Tibial artery (tissue), 4 donors: ENCODE measurements at regions of chr11 and their contacts with region 1.

Region 1: DNA sequence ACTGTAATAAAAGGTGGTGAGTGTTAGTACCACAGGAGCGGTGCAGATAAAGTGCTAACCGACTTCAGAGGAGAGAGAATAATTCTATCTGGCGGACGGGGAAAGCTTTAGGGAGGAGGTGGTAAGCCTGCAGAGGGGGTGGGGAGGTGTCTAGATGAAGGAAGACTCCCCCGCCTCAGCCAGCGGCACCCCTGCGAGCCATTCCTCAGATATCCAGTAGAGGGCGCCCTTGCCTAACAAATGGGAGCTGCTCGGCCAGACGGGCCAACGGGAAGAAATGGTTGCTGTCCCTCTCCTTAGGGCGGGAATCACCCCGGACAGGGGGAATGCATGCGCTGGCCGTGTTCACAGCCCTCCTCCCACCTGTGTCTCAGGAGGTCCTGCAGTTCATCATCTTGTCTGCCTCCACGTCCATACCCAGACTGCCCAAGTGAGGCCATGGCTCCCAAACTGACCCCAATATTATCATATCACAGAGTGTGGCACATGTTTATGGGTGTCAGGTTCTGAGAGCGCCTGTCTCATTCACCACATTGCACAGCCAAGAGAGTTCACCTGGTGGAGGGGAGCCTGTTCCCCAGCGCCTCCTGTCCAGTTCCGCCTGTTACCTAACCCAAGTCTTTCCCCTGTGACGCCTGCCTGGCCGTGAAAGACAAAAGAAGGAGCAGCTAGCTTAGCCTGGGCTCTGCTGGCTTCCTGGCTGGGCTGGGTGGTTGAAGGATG is 85.5 kb downstream of the ST3GAL4 start:
- DNase-seq: peak; percentile 73 to 87
- H3K4me3 ChIP-seq: no peak overlapping the region
- H3K27ac ChIP-seq: no peak overlapping the region
- H3K4me1 ChIP-seq: peaks cover 0 to 4% (median 0%) of the 10 kb centered on the region in 4 donors
- H3K27me3 ChIP-seq: peaks cover 0 to 14% of the 10 kb centered on the region in 2 donors
- CTCF ChIP-seq: peak; percentile 93 to 94

Region 2: GRCh38 chr11:126480410-126481302 is 39.7 kb after region 1 on chr11:
- intact Hi-C with region 1: loop called (anchors 5 kb)
- DNase-seq: peak; percentile 89 to 90
- H3K4me3 ChIP-seq: peak overlapping the region; percentile 11 to 18
- H3K27ac ChIP-seq: peak overlapping the region; percentile 49 to 69
- H3K4me1 ChIP-seq: peaks cover 0 to 4% (median 0%) of the 10 kb centered on the region in 4 donors
- H3K27me3 ChIP-seq: peaks cover 0 to 10% of the 10 kb centered on the region in 2 donors
- CTCF ChIP-seq: peak; percentile 90 to 95

Region 3: GRCh38 chr11:127345819-127346459 is 905.0 kb after region 1 on chr11:
- intact Hi-C with region 1: loop called (anchors 5 kb)
- DNase-seq: no peak
- H3K4me3 ChIP-seq: no peak overlapping the region
- H3K27ac ChIP-seq: no peak overlapping the region
- H3K4me1 ChIP-seq: no peaks in the 10 kb centered on the region
- H3K27me3 ChIP-seq: no peaks in the 10 kb centered on the region
- CTCF ChIP-seq: peak; percentile 26 to 34